ENCODE measurements at regions of chr2 and their contacts with region 1.

Region 1: GRCh38 chr2:131105156-131105949 is at the start of gene PLEKHB2:
- DNase-seq: no peak
- H3K4me3 ChIP-seq: peak within 1 kb of the TSS; percentile 92
- CTCF ChIP-seq: peak; percentile 33

Region 2: DNA sequence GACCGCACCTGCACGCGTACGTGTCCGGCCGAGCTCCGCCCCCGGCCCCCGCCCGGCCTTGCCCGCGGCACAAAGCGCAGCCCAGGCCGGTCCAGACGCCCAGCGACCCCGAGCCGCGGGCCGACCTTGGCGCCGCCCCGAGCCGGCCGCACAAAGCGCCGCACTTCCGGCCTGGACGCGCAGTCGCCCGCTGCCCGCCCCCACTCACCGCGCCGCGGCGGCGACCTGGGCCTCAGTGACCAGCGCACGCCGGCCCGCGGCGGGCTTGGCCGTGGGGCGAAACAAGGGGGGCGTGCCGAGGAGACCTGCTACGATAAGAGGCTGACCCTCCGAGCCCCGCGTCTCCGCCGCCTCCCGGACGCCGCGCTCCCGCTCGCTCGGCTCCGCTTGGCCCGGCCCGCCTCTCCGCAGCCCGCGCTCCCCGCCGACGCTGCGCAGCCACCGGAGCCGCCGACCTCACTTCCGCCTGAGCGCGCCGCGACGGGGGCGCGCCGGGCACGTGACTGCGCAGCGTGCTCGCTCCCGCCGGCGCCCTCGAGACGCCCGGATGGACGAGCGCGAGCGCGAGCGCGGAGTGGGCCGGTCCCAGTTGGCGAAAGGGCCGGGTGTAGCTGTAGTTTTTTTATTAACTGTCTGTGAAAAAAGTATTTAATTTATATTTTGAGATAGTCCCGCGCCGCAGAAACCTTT is 12.2 kb before region 1 on chr2 and contains the start of gene FAM168B:
- CTCF ChIA-PET with region 1: interaction called, 32 read pairs
- POLR2A ChIA-PET with region 1: interaction called, 8 read pairs
- DNase-seq: peak; percentile 21
- H3K4me3 ChIP-seq: peak within 1 kb of the TSS; percentile 80
- CTCF ChIP-seq: no peak